CD4-positive, alpha-beta memory T cell (primary cell): ENCODE measurements at regions of chr19 and their contacts with region 1.

Region 1: GRCh38 chr19:29844891-29845572 is 33.2 kb downstream of the CCNE1 start:
- DNase-seq: peak in 4 of 5 donors; percentile 94 to 96 (median 96)
- H3K4me3 ChIP-seq: peak overlapping the region; percentile 67 to 71
- H3K4me3 Mint-ChIP-seq: peak overlapping the region; percentile 88 to 98 (median 94)
- H3K27ac ChIP-seq: peak overlapping the region; percentile 63
- H3K27ac Mint-ChIP-seq: peak overlapping the region; percentile 81 to 98 (median 95)
- H3K4me1 ChIP-seq: peaks cover 21% of the 10 kb centered on the region
- H3K4me1 Mint-ChIP-seq: peaks cover 7 to 24% (median 12%) of the 10 kb centered on the region in 4 donors
- H3K27me3 ChIP-seq: no peaks in the 10 kb centered on the region
- H3K27me3 Mint-ChIP-seq: peaks cover 0 to 1% of the 10 kb centered on the region in 2 donors

Region 2: GRCh38 chr19:29212648-29213573 is 632.1 kb before region 1 on chr19 and contains the start of gene UQCRFS1:
- CTCF ChIA-PET with region 1: no interaction called
- POLR2A ChIA-PET with region 1: no interaction called
- intact Hi-C with region 1: loop called (anchors 10 kb)
- DNase-seq: peak; percentile 93 to 96 (median 95)
- H3K4me3 ChIP-seq: peak within 1 kb of the TSS; percentile 75 to 82
- H3K4me3 Mint-ChIP-seq: peak within 1 kb of the TSS; percentile 93 to 99 (median 98)
- H3K27ac ChIP-seq: peak within 1 kb of the TSS; percentile 88
- H3K27ac Mint-ChIP-seq: peak within 1 kb of the TSS; percentile 94 to 99 (median 99)
- H3K4me1 ChIP-seq: peaks cover 36% of the 10 kb centered on the region
- H3K4me1 Mint-ChIP-seq: peaks cover 34 to 50% (median 42%) of the 10 kb centered on the region in 4 donors
- H3K27me3 ChIP-seq: no peaks in the 10 kb centered on the region
- H3K27me3 Mint-ChIP-seq: peaks cover 1 to 10% of the 10 kb centered on the region in 2 donors
- total RNA-seq, gene UQCRFS1: 16.2 to 17.6 TPM

Region 3: GRCh38 chr19:29671393-29672160 is 173.5 kb before region 1 on chr19:
- CTCF ChIA-PET with region 1: interaction called, 3 read pairs
- POLR2A ChIA-PET with region 1: interaction called, 13 read pairs
- intact Hi-C with region 1: no loop called
- DNase-seq: peak; percentile 81 to 96 (median 86)
- H3K4me3 ChIP-seq: peak overlapping the region; percentile 14 to 46
- H3K4me3 Mint-ChIP-seq: peak overlapping the region; percentile 62 to 96 (median 76)
- H3K27ac ChIP-seq: peak overlapping the region; percentile 92
- H3K27ac Mint-ChIP-seq: peak overlapping the region; percentile 93 to 100 (median 98)
- H3K4me1 ChIP-seq: peaks cover 97% of the 10 kb centered on the region
- H3K4me1 Mint-ChIP-seq: peaks cover 58 to 96% (median 79%) of the 10 kb centered on the region in 4 donors
- H3K27me3 ChIP-seq: no peaks in the 10 kb centered on the region
- H3K27me3 Mint-ChIP-seq: no peaks in the 10 kb centered on the region

Region 4: DNA sequence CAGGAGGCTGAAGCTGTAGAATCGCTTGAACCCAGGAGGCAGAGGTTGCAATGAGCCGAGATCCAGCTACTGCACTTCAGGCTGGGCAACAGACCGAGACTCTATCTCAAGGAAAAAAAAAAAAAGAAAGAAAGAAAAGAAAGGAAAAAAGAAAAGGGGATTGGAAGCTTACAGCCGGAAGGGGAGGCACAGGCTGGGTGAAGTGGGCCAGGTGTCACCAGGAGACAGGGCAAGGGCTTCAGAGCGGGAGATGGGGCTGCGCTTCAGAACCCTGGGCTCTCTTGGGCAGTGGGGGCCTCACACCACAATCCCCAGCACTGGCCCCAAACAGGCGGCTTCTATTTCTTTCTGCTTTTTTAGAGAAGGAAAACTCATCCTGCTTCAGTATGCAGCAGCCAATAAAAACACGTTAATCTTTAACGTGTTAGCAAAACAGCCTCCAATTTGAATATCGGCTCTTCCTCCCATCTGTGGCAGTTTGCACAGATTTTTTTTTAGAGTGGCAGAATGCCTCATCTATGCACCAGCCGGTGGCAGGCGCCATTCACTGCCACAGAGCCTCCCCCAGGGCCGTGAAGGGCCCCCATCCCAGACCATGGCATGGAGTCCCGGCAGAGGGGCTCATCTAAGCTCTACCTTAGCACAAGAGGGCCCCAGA is 83.3 kb before region 1 on chr19:
- CTCF ChIA-PET with region 1: interaction called, 10 read pairs
- POLR2A ChIA-PET with region 1: interaction called, 4 read pairs
- intact Hi-C with region 1: loop called (anchors 1 kb)
- DNase-seq: no peak
- H3K4me3 ChIP-seq: no peak overlapping the region
- H3K4me3 Mint-ChIP-seq: no peak overlapping the region
- H3K27ac ChIP-seq: no peak overlapping the region
- H3K27ac Mint-ChIP-seq: no peak overlapping the region
- H3K4me1 ChIP-seq: peaks cover 8% of the 10 kb centered on the region
- H3K4me1 Mint-ChIP-seq: no peaks in the 10 kb centered on the region
- H3K27me3 ChIP-seq: no peaks in the 10 kb centered on the region
- H3K27me3 Mint-ChIP-seq: peaks cover 0 to 3% of the 10 kb centered on the region in 2 donors

Region 5: GRCh38 chr19:29831041-29831548 is 13.9 kb before region 1 on chr19:
- CTCF ChIA-PET with region 1: interaction called, 8 read pairs
- POLR2A ChIA-PET with region 1: interaction called, 69 read pairs
- intact Hi-C with region 1: loop called (anchors 1 kb)
- DNase-seq: peak; percentile 73 to 82 (median 81)
- H3K4me3 ChIP-seq: peak overlapping the region in 1 of 2 donors; percentile 17
- H3K4me3 Mint-ChIP-seq: peak overlapping the region; percentile 78 to 88 (median 84)
- H3K27ac ChIP-seq: peak overlapping the region; percentile 54
- H3K27ac Mint-ChIP-seq: peak overlapping the region; percentile 83 to 99 (median 96)
- H3K4me1 ChIP-seq: peaks cover 29% of the 10 kb centered on the region
- H3K4me1 Mint-ChIP-seq: peaks cover 17 to 46% (median 29%) of the 10 kb centered on the region in 4 donors
- H3K27me3 ChIP-seq: no peaks in the 10 kb centered on the region
- H3K27me3 Mint-ChIP-seq: no peaks in the 10 kb centered on the region

Region 6: GRCh38 chr19:29873024-29873800 is 28.2 kb after region 1 on chr19:
- CTCF ChIA-PET with region 1: no interaction called
- POLR2A ChIA-PET with region 1: interaction called, 3 read pairs
- intact Hi-C with region 1: loop called (anchors 2 kb)
- DNase-seq: peak in 4 of 5 donors; percentile 61 to 65 (median 61)
- H3K4me3 ChIP-seq: peak overlapping the region in 1 of 2 donors; percentile 47
- H3K4me3 Mint-ChIP-seq: peak overlapping the region; percentile 61 to 79 (median 74)
- H3K27ac ChIP-seq: no peak overlapping the region
- H3K27ac Mint-ChIP-seq: no peak overlapping the region
- H3K4me1 ChIP-seq: peaks cover 10% of the 10 kb centered on the region
- H3K4me1 Mint-ChIP-seq: peaks cover 0 to 24% (median 6%) of the 10 kb centered on the region in 4 donors
- H3K27me3 ChIP-seq: peaks cover 8% of the 10 kb centered on the region
- H3K27me3 Mint-ChIP-seq: peaks cover 3 to 22% of the 10 kb centered on the region in 2 donors